ENCODE measurements at regions of chr16 and their contacts with region 1.

Region 1: DNA sequence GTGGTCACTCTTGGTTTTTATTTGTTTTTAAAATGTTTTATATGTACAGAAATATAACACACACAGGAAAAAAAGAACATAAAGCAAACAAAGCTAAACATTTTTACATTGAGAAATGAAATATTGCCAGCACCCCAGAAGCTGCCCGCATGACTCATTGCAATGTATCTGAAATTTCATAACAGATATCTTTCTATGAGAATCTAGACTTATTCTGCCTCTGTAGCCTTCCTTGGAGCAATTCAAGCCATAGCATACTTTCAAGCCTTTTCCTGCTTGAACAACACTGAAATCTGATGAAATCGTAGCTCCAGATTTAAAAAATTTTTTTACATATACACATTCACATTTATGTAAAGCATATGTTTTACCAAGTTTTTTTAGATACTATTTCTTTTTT is 86.9 kb downstream of the RBBP6 start:
- DNase-seq: no peak
- ATAC-seq: no peak
- H3K4me3 ChIP-seq: no peak overlapping the region
- H3K27ac ChIP-seq: peak overlapping the region; percentile 2; the same call in 1 of the 2 replicates
- H3K4me1 ChIP-seq: peaks cover 5% of the 10 kb centered on the region; the same call in 1 of the 2 replicates
- H3K27me3 ChIP-seq: no peaks in the 10 kb centered on the region
- CTCF ChIP-seq: no peak

Region 2: GRCh38 chr16:23484510-23485256 is 1141.6 kb before region 1 on chr16:
- CTCF ChIA-PET with region 1: no interaction called
- POLR2A ChIA-PET with region 1: interaction called, 15 read pairs
- in situ Hi-C with region 1: no loop called
- intact Hi-C with region 1: no loop called
- DNase-seq: no peak
- ATAC-seq: no peak
- H3K4me3 ChIP-seq: no peak overlapping the region
- H3K27ac ChIP-seq: no peak overlapping the region
- H3K4me1 ChIP-seq: no peaks in the 10 kb centered on the region
- H3K27me3 ChIP-seq: no peaks in the 10 kb centered on the region
- CTCF ChIP-seq: no peak

Region 3: DNA sequence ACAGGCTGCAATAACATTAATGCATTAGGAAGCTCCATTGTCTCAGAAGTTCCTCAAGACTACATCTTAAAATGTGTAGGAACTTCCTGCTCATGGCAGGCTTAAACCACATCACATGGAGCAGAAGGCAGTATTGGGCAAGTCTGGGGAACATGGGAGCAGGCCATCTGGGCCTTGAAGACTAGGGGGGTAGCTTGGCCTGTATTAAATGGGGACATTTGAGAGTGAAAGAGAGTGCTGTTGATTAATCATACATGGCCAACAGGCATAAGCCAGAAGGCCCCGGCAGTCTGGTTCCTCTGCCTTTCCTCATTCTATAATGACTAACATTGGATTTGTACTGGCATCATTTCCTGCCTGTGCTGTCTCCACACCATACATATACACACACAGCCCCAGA is 194.3 kb after region 1 on chr16:
- CTCF ChIA-PET with region 1: no interaction called
- POLR2A ChIA-PET with region 1: no interaction called
- in situ Hi-C with region 1: no loop called
- intact Hi-C with region 1: no loop called
- DNase-seq: no peak
- ATAC-seq: no peak
- H3K4me3 ChIP-seq: no peak overlapping the region
- H3K27ac ChIP-seq: no peak overlapping the region
- H3K4me1 ChIP-seq: no peaks in the 10 kb centered on the region
- H3K27me3 ChIP-seq: no peaks in the 10 kb centered on the region
- CTCF ChIP-seq: no peak

Measured in Panc1 (cell line).